ENCODE measurements at regions of chr11 and their contacts with region 1.

Region 1: DNA sequence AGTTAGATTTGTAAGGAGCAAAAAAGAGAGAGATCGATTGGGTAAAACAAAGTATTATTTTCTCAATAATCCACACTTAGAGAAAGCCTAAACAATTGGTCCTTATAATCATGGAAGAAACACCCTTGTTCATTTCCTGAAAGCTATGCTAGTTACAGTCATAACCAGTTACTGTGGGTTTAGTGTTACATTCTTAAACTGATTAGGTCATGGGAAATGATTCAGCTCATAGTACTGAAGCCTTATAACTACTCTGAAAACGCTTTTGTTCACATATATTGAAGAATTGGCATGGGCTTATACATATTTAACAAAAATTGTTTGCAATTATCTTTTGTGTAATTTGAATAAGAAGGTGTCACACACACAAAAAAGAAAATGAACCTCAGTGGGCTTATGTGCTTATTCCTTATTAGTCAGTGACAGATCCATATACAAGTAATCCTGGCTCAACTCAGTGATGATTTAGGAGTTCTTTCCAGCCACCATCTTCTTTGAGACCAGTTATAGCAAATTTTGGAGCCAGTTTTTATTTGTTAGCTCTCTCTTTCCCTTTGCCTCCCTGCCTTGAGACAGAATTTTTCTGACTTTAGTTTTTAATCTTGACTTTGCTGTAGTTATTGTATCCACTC is 198.5 kb upstream of the CTSC start:
- DNase-seq: no peak
- H3K4me3 ChIP-seq: no peak overlapping the region
- H3K4me3 Mint-ChIP-seq: no peak overlapping the region
- H3K27ac ChIP-seq: no peak overlapping the region
- H3K27ac Mint-ChIP-seq: no peak overlapping the region
- H3K4me1 ChIP-seq: no peaks in the 10 kb centered on the region
- H3K4me1 Mint-ChIP-seq: no peaks in the 10 kb centered on the region
- H3K27me3 ChIP-seq: no peaks in the 10 kb centered on the region
- H3K27me3 Mint-ChIP-seq: peaks cover 0 to 1% of the 10 kb centered on the region in 2 donors

Region 2: DNA sequence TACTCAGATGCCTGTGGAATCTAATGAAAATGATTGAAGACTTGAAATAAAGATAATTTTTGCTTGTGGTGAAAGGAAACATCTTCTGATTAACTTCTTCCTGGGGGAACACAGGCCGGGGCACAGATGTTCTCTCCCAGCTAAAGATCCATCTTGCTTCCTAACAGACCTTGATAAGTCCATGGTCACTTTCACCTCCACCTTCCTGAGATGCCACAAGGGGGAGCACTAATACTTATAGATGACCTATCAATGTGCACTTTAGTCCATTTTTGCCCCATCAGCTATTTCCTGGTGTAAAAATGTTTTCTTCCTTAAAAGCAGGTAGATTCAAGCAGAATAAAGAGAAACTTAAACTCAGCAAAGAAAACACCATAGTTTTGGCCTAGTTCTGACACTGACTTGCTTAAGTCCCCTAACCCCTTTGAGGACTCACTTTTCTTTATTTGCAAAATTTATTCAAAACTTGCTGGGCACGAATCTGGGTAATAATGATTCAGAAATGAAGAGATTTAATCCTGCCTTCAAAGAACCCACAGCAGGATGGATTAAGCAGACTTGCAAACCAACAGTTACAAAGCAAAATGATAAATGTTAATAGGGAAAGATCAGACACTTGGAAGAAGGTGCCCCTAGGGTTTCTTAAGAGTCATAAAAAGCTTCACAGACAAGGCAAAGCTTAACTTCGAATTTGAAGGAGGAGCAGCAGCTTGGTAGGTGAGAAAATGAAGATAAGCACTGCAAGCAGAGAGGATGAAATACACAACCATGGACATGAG is 519.5 kb before region 1 on chr11:
- CTCF ChIA-PET with region 1: interaction called, 77 read pairs
- POLR2A ChIA-PET with region 1: no interaction called
- intact Hi-C with region 1: no loop called
- DNase-seq: peak; percentile 52 to 61 (median 54)
- H3K4me3 ChIP-seq: no peak overlapping the region
- H3K4me3 Mint-ChIP-seq: no peak overlapping the region
- H3K27ac ChIP-seq: no peak overlapping the region
- H3K27ac Mint-ChIP-seq: no peak overlapping the region
- H3K4me1 ChIP-seq: no peaks in the 10 kb centered on the region
- H3K4me1 Mint-ChIP-seq: no peaks in the 10 kb centered on the region
- H3K27me3 ChIP-seq: no peaks in the 10 kb centered on the region
- H3K27me3 Mint-ChIP-seq: peaks cover 3 to 6% of the 10 kb centered on the region in 2 donors

Measured in CD4-positive, alpha-beta memory T cell (primary cell).